Right cardiac atrium (tissue), 5 donors: ENCODE measurements at regions of chr9 and their contacts with region 1.

Region 1: DNA sequence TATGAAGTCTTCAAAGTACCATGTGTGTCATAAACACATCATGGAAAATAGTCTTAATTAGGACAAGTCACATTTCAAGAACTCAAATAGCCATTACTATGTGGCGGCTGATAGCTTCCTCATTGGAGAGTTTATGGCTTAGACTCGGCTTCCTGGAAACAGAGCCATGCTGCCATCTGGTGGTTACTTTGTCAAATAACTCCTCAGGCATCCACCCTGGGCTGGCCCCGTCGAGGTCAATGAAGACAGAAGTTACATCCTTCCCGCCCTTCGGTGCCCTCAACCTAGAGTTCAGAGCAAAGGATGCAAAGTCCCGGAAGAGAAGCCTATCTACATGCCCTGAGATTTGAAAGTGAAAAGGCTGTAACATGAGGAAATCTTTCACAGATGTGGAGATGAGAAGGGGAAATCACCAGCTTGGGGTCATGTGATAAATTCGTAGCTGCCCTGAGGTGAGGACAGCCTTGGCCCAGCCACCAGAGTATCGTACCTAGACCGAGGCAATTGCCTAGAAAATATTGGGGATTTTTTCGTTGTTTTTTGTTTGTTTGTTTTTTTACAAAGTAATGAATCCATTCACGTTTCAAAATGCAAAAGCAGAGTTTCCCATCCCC is 45.5 kb upstream of the ZNF169 start:
- DNase-seq: peak; percentile 54 to 74 (median 74)
- ATAC-seq: peak; percentile 94 to 96
- H3K4me3 ChIP-seq: no peak overlapping the region
- H3K27ac ChIP-seq: no peak overlapping the region
- H3K4me1 ChIP-seq: peaks cover 1% of the 10 kb centered on the region
- H3K27me3 ChIP-seq: no peaks in the 10 kb centered on the region

Region 2: GRCh38 chr9:94014065-94014654 is 199.5 kb before region 1 on chr9:
- intact Hi-C with region 1: loop called in 2 of 4 experiments (anchors 5 to 10 kb)
- DNase-seq: no peak
- ATAC-seq: no peak
- H3K4me3 ChIP-seq: no peak overlapping the region
- H3K27ac ChIP-seq: no peak overlapping the region
- H3K4me1 ChIP-seq: no peaks in the 10 kb centered on the region
- H3K27me3 ChIP-seq: no peaks in the 10 kb centered on the region

Region 3: GRCh38 chr9:94065535-94065961 is 148.1 kb before region 1 on chr9:
- intact Hi-C with region 1: loop called (anchors 2 to 5 kb)
- DNase-seq: peak; percentile 66 to 87 (median 75)
- ATAC-seq: peak; percentile 77 to 87
- H3K4me3 ChIP-seq: no peak overlapping the region
- H3K27ac ChIP-seq: no peak overlapping the region
- H3K4me1 ChIP-seq: no peaks in the 10 kb centered on the region
- H3K27me3 ChIP-seq: no peaks in the 10 kb centered on the region

Region 4: GRCh38 chr9:94166237-94166963 is 47.2 kb before region 1 on chr9:
- intact Hi-C with region 1: no loop called
- DNase-seq: peak; percentile 98 to 99 (median 99)
- ATAC-seq: peak; percentile 87 to 88
- H3K4me3 ChIP-seq: peak overlapping the region; percentile 93
- H3K27ac ChIP-seq: peak overlapping the region; percentile 99
- H3K4me1 ChIP-seq: peaks cover 4% of the 10 kb centered on the region
- H3K27me3 ChIP-seq: no peaks in the 10 kb centered on the region

Region 5: GRCh38 chr9:94259077-94259892 is 45.7 kb after region 1 on chr9 and contains the start of gene ZNF169:
- intact Hi-C with region 1: no loop called
- DNase-seq: peak; percentile 93 to 97 (median 96)
- ATAC-seq: peak; percentile 100
- H3K4me3 ChIP-seq: peak within 1 kb of the TSS; percentile 88
- H3K27ac ChIP-seq: peak within 1 kb of the TSS; percentile 22
- H3K4me1 ChIP-seq: no peaks in the 10 kb centered on the region
- H3K27me3 ChIP-seq: no peaks in the 10 kb centered on the region
- total RNA-seq, gene ZNF169: 2.6 to 3.2 (median 2.7) TPM